PC-9 (cell line): ENCODE measurements at regions of chr6 and their contacts with region 1.

Region 1: GRCh38 chr6:47299965-47300364 is 9.7 kb downstream of the TNFRSF21 start:
- DNase-seq: no peak
- H3K4me3 ChIP-seq: no peak overlapping the region
- H3K27ac ChIP-seq: 0 out of 2 replicates have a peak overlapping the region, but pooled peaks have one; percentile 1
- H3K4me1 ChIP-seq: peaks cover 98% of the 10 kb centered on the region
- H3K27me3 ChIP-seq: no peaks in the 10 kb centered on the region
- CTCF ChIP-seq: no peak

Region 2: GRCh38 chr6:47197682-47198640 is 102.0 kb before region 1 on chr6:
- CTCF ChIA-PET with region 1: no interaction called
- POLR2A ChIA-PET with region 1: interaction called, 10 read pairs
- intact Hi-C with region 1: no loop called
- DNase-seq: no peak
- H3K4me3 ChIP-seq: peak overlapping the region; percentile 17; the same call in 1 of the 2 replicates
- H3K27ac ChIP-seq: peak overlapping the region; percentile 34; the same call in 1 of the 2 replicates
- H3K4me1 ChIP-seq: peaks cover 5% of the 10 kb centered on the region; the same call in 1 of the 2 replicates
- H3K27me3 ChIP-seq: no peaks in the 10 kb centered on the region
- CTCF ChIP-seq: no peak